HAP-1 (cell line): ENCODE measurements at regions of chr14 and their contacts with region 1.

Region 1: DNA sequence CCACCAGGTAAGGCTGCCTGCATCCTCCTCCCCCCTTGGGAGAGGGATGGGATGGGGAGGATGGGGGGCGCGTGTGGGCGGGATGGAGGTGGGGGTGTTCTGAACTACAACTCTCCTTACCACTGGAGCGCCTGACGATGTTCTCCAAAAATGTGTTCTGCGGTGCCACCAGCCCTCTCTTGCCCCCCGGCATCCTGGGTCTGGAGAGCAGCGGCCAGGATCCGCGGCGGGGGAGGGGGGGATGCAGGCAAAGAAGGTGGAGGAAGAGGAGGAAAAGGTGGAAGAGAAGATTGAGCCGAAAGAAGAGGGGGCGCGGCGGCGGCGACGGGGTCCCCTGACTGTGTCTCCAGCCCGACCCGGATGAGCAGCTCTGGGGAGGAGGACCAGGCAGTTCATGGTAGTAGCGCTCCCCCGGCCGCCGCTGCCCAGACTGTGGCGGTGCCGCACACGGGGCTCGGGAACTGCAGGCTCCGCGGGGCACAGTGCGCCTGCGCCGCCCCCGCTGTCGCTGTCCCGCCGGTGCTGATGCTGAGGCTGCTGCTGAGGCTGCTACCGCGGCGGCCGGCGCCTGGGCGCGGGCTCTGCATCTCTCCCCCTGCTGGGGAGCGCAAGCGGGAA is at the start of gene KCNH5:
- DNase-seq: peak; percentile 67 to 78
- H3K4me3 ChIP-seq: peak within 1 kb of the TSS; percentile 45
- H3K4me1 ChIP-seq: peaks cover 9% of the 10 kb centered on the region
- H3K27me3 ChIP-seq: peaks cover 7% of the 10 kb centered on the region

Region 2: DNA sequence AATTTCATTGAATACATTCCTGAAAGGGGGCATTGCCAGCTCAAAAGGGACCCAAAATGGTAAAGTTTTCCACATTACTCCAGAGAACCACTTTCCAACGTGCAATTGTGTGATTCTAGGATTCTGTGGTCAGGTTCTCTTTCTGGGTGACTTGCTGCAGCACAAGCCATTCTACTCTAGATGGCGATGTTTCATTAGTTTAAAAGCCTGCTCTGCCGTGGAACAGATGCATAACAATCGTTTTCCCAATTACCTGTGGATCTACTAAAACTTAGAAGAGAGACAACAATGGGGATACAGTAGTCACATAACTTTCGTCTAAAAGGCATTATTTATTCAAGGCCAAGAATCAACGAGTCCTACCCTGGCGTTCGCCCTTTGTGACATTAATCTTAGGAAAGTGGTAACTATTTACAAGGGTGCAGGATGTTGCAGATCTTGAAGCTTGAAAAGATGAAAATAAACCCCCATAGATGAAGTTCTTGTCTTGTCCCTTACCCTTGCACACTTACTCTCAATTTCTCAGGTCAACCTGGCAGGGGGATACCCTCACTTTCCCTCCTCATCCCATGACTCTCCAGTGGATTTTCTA is 882.0 kb before region 1 on chr14:
- in situ Hi-C with region 1: loop called (anchors 25 kb)
- DNase-seq: peak; percentile 36 to 41
- H3K4me3 ChIP-seq: no peak overlapping the region
- H3K4me1 ChIP-seq: no peaks in the 10 kb centered on the region
- H3K27me3 ChIP-seq: no peaks in the 10 kb centered on the region